ENCODE measurements at regions of chr3 and their contacts with region 1.

Region 1: DNA sequence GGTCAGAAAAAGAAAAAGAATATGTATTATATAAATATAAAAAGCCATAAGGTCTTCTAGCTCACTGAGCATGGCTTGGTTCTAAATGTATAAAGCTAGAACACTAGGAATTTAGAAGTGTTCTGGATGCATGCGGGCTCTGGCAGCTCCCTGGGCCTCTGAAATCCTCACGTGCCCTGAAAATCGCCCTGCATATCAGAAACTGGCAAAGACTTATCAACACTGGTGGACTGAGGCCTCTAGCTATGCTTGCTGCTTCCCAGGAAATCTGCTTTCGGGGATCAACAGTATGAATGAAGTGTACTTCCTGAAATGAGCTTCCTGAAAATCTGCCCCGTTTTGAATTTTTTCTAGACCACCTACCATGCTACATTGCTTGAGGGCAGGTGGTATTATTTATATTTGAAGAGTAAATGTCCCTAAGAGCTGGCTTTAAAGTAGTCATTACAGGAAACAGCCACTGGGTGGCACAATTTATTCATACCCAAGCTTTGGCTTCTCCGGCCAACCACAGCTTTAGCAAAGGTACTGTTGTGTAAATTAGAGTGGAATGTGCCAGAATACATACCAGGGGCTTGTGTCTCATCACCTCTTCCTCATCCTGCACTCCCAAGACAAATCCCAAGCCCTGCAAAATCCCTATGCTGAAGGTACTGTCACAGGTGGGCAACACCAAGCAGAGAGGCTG is 17.7 kb downstream of the CRTAP start:
- DNase-seq: peak; percentile 54
- H3K4me3 Mint-ChIP-seq: no peak overlapping the region
- H3K27ac Mint-ChIP-seq: no peak overlapping the region
- H3K4me1 Mint-ChIP-seq: peaks cover 12% of the 10 kb centered on the region
- H3K27me3 Mint-ChIP-seq: no peaks in the 10 kb centered on the region

Region 2: GRCh38 chr3:33119891-33120290 is 11.6 kb before region 1 on chr3:
- CTCF ChIA-PET with region 1: interaction called, 21 read pairs
- DNase-seq: no peak
- H3K4me3 Mint-ChIP-seq: no peak overlapping the region
- H3K27ac Mint-ChIP-seq: no peak overlapping the region
- H3K4me1 Mint-ChIP-seq: peaks cover 5% of the 10 kb centered on the region
- H3K27me3 Mint-ChIP-seq: no peaks in the 10 kb centered on the region

Region 3: GRCh38 chr3:33144433-33144832 is 13.0 kb after region 1 on chr3:
- CTCF ChIA-PET with region 1: interaction called, 14 read pairs
- DNase-seq: peak; percentile 45
- H3K4me3 Mint-ChIP-seq: no peak overlapping the region
- H3K27ac Mint-ChIP-seq: no peak overlapping the region
- H3K4me1 Mint-ChIP-seq: no peaks in the 10 kb centered on the region
- H3K27me3 Mint-ChIP-seq: peaks cover 13% of the 10 kb centered on the region

Region 4: DNA sequence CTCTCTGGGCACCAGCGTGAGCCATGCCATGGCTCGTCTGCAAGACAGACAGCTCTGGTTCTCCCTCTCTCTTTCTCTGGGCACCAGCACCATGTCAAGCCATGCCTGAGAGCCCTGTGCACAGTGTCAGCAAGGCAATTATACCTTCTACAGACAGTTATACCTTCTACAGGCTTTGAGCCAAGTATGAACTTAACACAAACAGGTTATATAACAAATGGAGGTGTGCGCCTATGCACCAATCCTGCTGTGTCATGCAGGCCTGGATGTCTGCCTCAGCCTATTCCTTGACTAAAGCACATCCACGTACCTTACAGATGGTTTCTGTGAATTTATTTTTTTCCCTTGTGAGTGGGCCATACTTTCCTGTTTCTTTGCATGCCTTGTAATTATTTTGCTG is 139.8 kb after region 1 on chr3:
- CTCF ChIA-PET with region 1: no interaction called
- DNase-seq: no peak
- H3K4me3 Mint-ChIP-seq: no peak overlapping the region
- H3K27ac Mint-ChIP-seq: no peak overlapping the region
- H3K4me1 Mint-ChIP-seq: no peaks in the 10 kb centered on the region
- H3K27me3 Mint-ChIP-seq: peaks cover 27% of the 10 kb centered on the region

Region 5: DNA sequence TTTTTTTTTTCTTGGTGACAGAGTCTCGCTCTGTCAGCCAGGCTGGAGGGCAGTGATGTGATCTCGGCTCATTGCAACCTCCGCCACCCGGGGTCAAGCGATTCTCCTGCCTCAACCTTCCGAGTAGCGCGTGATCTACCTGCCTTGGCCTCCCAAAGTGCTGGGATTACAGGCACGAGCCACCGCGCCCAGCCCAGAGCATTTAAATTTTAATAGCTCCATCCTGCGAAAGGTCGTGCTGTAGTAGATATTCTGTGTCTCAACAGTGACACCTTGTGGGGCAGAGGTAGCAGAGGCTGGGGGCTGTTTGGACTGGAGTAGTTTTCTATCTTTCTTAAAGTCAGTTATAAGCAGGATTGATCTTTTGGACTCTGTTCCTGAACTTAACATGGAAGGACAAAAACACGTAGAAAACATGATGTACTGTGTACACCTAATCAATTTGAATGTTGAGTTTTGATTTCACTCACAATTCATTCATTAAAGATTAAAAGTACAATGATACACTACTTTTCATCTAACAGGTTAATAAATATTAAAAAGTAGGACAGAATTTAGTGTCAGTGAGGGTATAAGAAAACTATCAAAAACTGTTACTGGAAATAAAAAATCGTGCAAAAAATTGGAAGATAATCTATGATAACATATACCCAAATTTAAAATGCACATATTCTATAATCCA is 656.0 kb after region 1 on chr3:
- CTCF ChIA-PET with region 1: interaction called, 13 read pairs
- DNase-seq: peak; percentile 67
- H3K4me3 Mint-ChIP-seq: no peak overlapping the region
- H3K27ac Mint-ChIP-seq: no peak overlapping the region
- H3K4me1 Mint-ChIP-seq: peaks cover 4% of the 10 kb centered on the region
- H3K27me3 Mint-ChIP-seq: peaks cover 27% of the 10 kb centered on the region

Measured in activated naive CD4-positive, alpha-beta T cell treated with anti-CD3 and anti-CD28 coated beads, Interleukin-2, amount 10 ng/mL, durations not matched to agents 7 days and 5 days (primary cell).